A673 (cell line): ENCODE measurements at regions of chr1 and their contacts with region 1.

Region 1: DNA sequence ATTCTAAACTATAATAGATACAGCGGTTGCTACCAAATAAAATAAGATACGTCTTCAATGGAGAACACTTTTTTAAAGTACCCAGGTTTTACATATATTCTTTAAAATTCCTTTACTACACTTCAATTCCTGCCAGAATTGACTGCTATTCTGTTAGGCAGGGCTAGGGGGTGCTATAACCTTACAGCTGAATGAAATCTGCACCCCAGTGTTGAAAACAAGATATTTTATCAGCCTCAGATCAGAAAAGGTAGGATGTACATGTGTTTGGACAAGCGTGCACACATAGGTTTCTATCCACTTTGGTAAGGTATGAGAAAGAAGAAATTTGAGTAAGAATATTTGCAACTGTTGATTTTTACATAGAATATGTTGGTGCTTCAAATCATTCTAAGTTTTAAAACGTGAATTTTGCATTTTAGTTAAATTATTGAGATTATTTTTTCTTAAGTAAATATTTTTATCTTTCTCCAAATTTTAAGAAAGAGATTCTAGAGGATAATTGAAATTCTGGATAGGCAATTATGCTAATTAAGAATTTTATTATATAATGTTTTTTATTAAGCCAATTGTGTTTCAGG is 490.8 kb upstream of the ADGRL4 start:
- DNase-seq: peak; percentile 65
- H3K4me3 ChIP-seq: no peak overlapping the region
- H3K27ac ChIP-seq: no peak overlapping the region
- H3K4me1 ChIP-seq: no peaks in the 10 kb centered on the region
- H3K27me3 ChIP-seq: no peaks in the 10 kb centered on the region
- CTCF ChIP-seq: peak; percentile 96

Region 2: DNA sequence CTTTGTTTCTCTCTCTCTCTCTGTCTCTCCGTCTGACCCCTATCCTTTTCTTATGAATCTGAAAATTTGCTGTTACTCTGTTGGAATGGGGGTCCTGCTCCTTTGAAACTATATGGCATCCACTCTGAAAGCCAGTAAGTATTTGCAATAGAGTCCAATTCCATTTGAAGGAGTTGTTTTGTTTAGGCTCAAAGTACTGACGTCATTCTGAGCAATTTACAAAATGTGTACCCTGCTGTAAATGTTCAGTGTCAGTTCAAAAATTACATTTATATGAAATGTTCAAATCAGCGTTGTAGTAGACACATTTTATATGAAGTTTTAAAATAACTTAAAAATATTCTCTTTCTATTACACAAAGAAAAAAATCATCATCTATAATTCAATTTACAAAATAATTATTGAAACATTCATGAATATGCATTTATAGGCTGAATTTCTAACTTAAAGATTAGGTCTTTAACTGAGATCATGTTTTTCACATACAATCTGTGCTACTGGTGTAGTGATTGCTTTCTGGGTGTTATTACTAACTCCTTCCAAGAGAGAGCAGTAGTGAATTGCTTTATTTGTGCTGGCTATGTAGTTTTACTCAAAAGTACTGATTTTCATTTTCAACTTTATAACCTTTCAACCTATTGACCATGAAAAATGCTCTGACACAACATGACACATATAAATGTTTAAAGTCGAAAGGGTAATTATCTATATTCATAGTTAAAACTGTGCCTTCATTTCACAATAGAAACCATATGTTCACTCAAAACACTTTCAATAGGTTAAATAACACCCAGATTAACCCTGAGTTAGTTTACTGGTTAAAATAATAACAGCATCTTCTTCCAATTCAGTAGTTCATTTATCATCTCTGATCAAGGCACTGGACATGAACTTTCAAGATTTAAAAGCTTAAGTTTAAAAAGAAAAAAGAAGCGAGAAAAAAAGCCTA is 237.6 kb before region 1 on chr1:
- CTCF ChIA-PET with region 1: no interaction called
- POLR2A ChIA-PET with region 1: no interaction called
- intact Hi-C with region 1: loop called (anchors 5 kb)
- DNase-seq: peak; percentile 68
- H3K4me3 ChIP-seq: no peak overlapping the region
- H3K27ac ChIP-seq: no peak overlapping the region
- H3K4me1 ChIP-seq: peaks cover 36% of the 10 kb centered on the region
- H3K27me3 ChIP-seq: no peaks in the 10 kb centered on the region
- CTCF ChIP-seq: peak; percentile 80

Region 3: GRCh38 chr1:79679916-79680315 is 182.6 kb after region 1 on chr1:
- CTCF ChIA-PET with region 1: interaction called, 3 read pairs
- POLR2A ChIA-PET with region 1: no interaction called
- intact Hi-C with region 1: loop called (anchors 10 kb)
- DNase-seq: no peak
- H3K4me3 ChIP-seq: no peak overlapping the region
- H3K27ac ChIP-seq: no peak overlapping the region
- H3K4me1 ChIP-seq: no peaks in the 10 kb centered on the region
- H3K27me3 ChIP-seq: no peaks in the 10 kb centered on the region
- CTCF ChIP-seq: no peak

Region 4: DNA sequence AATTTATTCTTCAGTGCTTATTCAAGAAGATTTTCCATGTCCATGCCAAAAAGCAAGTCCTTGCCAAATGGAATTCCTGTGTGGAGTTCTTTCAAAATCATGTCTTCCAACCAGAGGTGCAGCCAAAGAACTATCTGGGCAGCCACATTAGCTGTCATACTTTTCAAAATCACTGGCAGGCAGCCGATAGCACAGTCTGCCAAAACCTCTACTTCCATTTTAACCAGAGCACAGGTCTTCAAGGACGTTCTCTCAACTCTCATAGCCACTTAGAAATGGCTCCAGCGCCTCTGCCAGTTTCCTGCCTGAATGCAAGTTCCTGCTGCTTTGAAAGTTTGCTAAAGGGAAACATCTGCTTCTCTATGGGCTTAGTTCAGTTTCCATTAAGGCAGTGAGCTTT is 484.9 kb after region 1 on chr1:
- CTCF ChIA-PET with region 1: no interaction called
- POLR2A ChIA-PET with region 1: no interaction called
- intact Hi-C with region 1: loop called (anchors 10 kb)
- DNase-seq: no peak
- H3K4me3 ChIP-seq: no peak overlapping the region
- H3K27ac ChIP-seq: no peak overlapping the region
- H3K4me1 ChIP-seq: no peaks in the 10 kb centered on the region
- H3K27me3 ChIP-seq: no peaks in the 10 kb centered on the region
- CTCF ChIP-seq: no peak

Region 5: DNA sequence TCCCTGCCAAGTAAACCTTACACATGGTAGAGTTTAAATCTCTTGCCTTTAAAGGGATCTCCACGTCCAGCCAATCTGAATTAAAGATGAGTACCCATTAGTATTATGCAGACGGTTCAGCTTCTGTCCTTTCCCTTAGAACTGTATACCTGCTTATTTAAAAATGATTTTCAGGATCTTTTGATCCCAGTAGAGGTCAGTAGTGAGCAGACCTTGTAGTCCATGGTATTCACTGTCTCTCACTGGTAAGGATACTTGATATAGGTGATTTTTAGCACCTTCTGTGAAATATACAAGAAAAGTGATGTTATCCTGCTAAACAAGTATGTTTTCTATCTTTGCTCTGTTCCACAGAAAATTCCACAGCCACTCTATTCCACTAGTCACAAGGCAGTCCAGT is 720.8 kb after region 1 on chr1:
- CTCF ChIA-PET with region 1: no interaction called
- POLR2A ChIA-PET with region 1: no interaction called
- intact Hi-C with region 1: loop called (anchors 5 kb)
- DNase-seq: peak; percentile 67
- H3K4me3 ChIP-seq: no peak overlapping the region
- H3K27ac ChIP-seq: no peak overlapping the region
- H3K4me1 ChIP-seq: no peaks in the 10 kb centered on the region
- H3K27me3 ChIP-seq: no peaks in the 10 kb centered on the region
- CTCF ChIP-seq: peak; percentile 65